ENCODE measurements at regions of chr14 and their contacts with region 1.

Region 1: DNA sequence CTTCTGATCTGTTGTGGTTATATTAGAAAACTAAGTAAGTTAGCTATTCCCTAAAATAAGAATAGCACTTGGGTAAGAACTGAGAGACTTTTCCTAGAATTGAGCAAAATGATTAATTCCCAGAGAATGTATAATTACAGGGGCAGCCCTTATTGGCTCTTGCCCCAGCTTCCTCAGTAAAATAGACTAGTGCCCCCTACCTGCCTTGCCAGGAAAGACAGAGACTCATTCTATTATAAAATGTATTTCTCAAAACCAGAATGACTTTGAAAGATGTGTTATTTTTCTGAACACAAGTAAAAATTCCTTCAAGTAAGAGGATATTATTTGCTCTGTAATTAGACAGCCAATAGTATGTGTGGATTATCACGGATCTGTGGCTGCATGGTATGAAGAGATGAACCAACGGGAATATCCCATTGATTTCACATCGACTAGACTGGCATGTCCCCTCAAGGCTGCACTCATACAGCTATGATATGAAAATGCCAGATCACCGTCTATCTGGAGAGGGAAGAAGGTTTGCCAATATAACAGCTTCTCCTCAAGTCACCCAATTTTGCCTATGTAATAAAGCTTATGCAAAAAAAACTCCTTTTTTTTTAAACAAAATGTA is 7.4 kb upstream of the GLRX5 start:
- DNase-seq: peak in 7 of 9 donors; percentile 31 to 60 (median 54)
- ATAC-seq: peak; percentile 50
- H3K4me3 ChIP-seq: no peak overlapping the region
- H3K4me3 Mint-ChIP-seq: peak overlapping the region in 6 of 10 donors; percentile 1 to 54 (median 22)
- H3K27ac ChIP-seq: peak overlapping the region; percentile 49
- H3K27ac Mint-ChIP-seq: peak overlapping the region; percentile 14 to 97 (median 89)
- H3K4me1 ChIP-seq: peaks cover 25 to 39% of the 10 kb centered on the region in 2 donors
- H3K4me1 Mint-ChIP-seq: peaks cover 39 to 80% (median 77%) of the 10 kb centered on the region in 7 donors
- H3K27me3 ChIP-seq: no peaks in the 10 kb centered on the region
- H3K27me3 Mint-ChIP-seq: no peaks in the 10 kb centered on the region

Region 2: GRCh38 chr14:95425369-95426115 is 102.0 kb before region 1 on chr14:
- CTCF ChIA-PET with region 1: interaction called, 10 read pairs
- POLR2A ChIA-PET with region 1: no interaction called
- intact Hi-C with region 1: loop called (anchors 1 kb)
- DNase-seq: no peak
- ATAC-seq: no peak
- H3K4me3 ChIP-seq: no peak overlapping the region
- H3K4me3 Mint-ChIP-seq: no peak overlapping the region
- H3K27ac ChIP-seq: no peak overlapping the region
- H3K27ac Mint-ChIP-seq: peak overlapping the region in 2 of 9 donors; percentile 34 to 52
- H3K4me1 ChIP-seq: no peaks in the 10 kb centered on the region
- H3K4me1 Mint-ChIP-seq: peaks cover 0 to 6% (median 0%) of the 10 kb centered on the region in 7 donors
- H3K27me3 ChIP-seq: no peaks in the 10 kb centered on the region
- H3K27me3 Mint-ChIP-seq: no peaks in the 10 kb centered on the region

Region 3: GRCh38 chr14:95442633-95443021 is 84.9 kb before region 1 on chr14:
- CTCF ChIA-PET with region 1: interaction called, 209 read pairs
- POLR2A ChIA-PET with region 1: interaction called, 12 read pairs
- intact Hi-C with region 1: loop called (anchors 1 kb)
- DNase-seq: peak; percentile 51 to 76 (median 68)
- ATAC-seq: peak; percentile 94
- H3K4me3 ChIP-seq: no peak overlapping the region
- H3K4me3 Mint-ChIP-seq: no peak overlapping the region
- H3K27ac ChIP-seq: no peak overlapping the region
- H3K27ac Mint-ChIP-seq: peak overlapping the region; percentile 3 to 77 (median 57)
- H3K4me1 ChIP-seq: no peaks in the 10 kb centered on the region
- H3K4me1 Mint-ChIP-seq: peaks cover 4 to 15% (median 5%) of the 10 kb centered on the region in 7 donors
- H3K27me3 ChIP-seq: no peaks in the 10 kb centered on the region
- H3K27me3 Mint-ChIP-seq: no peaks in the 10 kb centered on the region

Region 4: DNA sequence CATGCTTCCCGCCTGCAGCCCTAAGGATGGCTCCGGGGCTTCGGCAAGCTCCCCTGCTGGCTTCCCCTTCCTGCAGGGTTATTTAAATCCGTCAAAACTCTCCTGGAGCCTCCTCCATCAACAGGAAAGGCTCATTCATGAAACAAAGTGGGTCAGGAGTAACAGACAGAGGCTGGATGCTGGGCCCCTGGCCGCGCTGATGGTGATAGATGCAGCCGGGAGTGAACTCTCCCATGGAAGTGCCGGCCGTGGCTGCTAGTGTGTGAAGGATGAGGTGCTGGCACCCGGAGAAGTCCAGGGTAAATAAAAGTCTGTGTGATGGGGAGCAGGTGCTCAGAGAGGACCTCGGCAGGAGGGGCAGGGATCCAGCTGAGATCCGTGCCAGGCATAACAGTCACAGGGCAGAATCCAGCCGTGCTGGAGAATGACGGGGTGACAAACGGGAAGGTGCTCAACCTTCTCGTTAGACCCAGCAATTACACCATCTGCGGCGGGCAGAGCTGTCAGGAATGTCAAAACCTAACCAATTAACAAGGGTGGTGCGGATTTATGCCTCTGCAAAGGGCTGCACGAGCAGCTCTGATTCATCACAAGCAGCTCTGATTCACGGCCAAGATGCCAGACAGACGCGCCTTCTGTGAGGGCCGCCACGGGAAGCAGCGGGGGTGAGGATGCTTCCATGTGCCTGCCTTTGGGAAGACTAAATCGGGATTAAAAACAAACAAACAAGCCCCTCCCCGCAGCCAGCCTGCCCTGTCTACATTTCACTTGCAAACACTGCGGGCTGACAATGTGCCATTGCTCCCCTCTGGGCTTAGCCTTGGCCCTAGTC is 66.6 kb before region 1 on chr14:
- CTCF ChIA-PET with region 1: interaction called, 21 read pairs
- POLR2A ChIA-PET with region 1: interaction called, 255 read pairs
- intact Hi-C with region 1: loop called (anchors 1 to 5 kb)
- DNase-seq: no peak
- ATAC-seq: no peak
- H3K4me3 ChIP-seq: no peak overlapping the region
- H3K4me3 Mint-ChIP-seq: peak overlapping the region in 6 of 10 donors; percentile 25 to 86 (median 34)
- H3K27ac ChIP-seq: peak overlapping the region; percentile 85
- H3K27ac Mint-ChIP-seq: peak overlapping the region in 8 of 9 donors; percentile 95 to 100 (median 99)
- H3K4me1 ChIP-seq: peaks cover 43 to 50% of the 10 kb centered on the region in 2 donors
- H3K4me1 Mint-ChIP-seq: peaks cover 38 to 77% (median 70%) of the 10 kb centered on the region in 7 donors
- H3K27me3 ChIP-seq: no peaks in the 10 kb centered on the region
- H3K27me3 Mint-ChIP-seq: no peaks in the 10 kb centered on the region

Region 5: GRCh38 chr14:95483309-95484165 is 44.0 kb before region 1 on chr14:
- CTCF ChIA-PET with region 1: no interaction called
- POLR2A ChIA-PET with region 1: interaction called, 4 read pairs
- intact Hi-C with region 1: loop called in 1 of 2 experiments (anchors 2 kb)
- DNase-seq: no peak
- ATAC-seq: no peak
- H3K4me3 ChIP-seq: no peak overlapping the region
- H3K4me3 Mint-ChIP-seq: no peak overlapping the region
- H3K27ac ChIP-seq: no peak overlapping the region
- H3K27ac Mint-ChIP-seq: peak overlapping the region; percentile 3 to 79 (median 60)
- H3K4me1 ChIP-seq: peaks cover under 1 to 19% of the 10 kb centered on the region in 2 donors
- H3K4me1 Mint-ChIP-seq: peaks cover 47 to 63% (median 55%) of the 10 kb centered on the region in 7 donors
- H3K27me3 ChIP-seq: no peaks in the 10 kb centered on the region
- H3K27me3 Mint-ChIP-seq: no peaks in the 10 kb centered on the region

Region 6: DNA sequence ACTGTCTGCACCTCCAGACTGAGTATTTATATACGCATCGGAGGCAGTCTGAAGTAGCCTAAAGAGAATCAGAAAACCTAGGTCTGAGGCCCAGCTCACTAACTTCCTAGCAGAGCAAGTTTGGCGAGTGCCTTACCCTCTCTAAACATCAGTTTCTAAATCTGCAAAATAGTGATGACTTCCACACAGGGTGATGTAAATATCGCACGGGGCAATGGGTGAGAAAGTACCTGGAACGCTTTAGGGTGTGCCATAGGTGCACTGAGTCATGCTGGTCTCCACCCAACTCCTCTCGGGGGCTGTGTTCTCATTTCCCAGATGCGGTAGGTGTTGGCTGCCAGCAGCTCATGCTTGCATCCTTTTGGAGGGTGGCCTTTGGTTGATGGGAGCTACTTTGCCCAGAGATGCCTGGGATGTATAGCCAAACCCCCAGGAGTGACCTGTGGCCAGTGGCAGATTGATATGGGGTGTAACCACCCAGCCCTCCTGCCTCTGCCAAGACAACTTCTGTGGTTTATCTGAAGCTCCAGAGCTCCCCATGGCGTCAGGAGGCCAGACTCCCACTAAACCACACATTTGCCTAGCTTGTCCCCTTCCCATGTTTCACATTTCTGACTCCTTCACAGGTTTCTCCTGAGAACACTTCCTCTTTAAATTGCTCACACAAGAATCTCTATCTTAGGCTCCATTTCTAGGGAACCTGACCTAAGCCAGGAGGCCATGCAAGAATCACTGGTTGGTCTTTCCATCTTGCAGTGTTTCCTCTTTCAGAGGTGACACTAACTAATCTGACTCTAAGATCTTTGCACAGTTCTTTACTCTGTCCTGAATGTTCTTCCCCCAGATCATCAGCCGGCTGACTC is 287.1 kb after region 1 on chr14:
- CTCF ChIA-PET with region 1: no interaction called
- POLR2A ChIA-PET with region 1: no interaction called
- intact Hi-C with region 1: no loop called
- DNase-seq: no peak
- ATAC-seq: no peak
- H3K4me3 ChIP-seq: no peak overlapping the region
- H3K4me3 Mint-ChIP-seq: no peak overlapping the region
- H3K27ac ChIP-seq: no peak overlapping the region
- H3K27ac Mint-ChIP-seq: no peak overlapping the region
- H3K4me1 ChIP-seq: no peaks in the 10 kb centered on the region
- H3K4me1 Mint-ChIP-seq: peaks cover 0 to 1% (median 0%) of the 10 kb centered on the region in 7 donors
- H3K27me3 ChIP-seq: peaks cover 0 to 5% of the 10 kb centered on the region in 2 donors
- H3K27me3 Mint-ChIP-seq: peaks cover 19 to 85% (median 54%) of the 10 kb centered on the region in 5 donors

Measured in naive thymus-derived CD4-positive, alpha-beta T cell (primary cell).